Activated CD8-positive, alpha-beta T cell treated with anti-CD3 and anti-CD28 coated beads, Interleukin-2, amount 10 ng/mL, durations not matched to agents 7 days and 5 days (primary cell): ENCODE measurements at regions of chr2 and their contacts with region 1.

Region 1: GRCh38 chr2:197255543-197255942 is 55.0 kb downstream of the ANKRD44 start:
- DNase-seq: peak; percentile 84
- ATAC-seq: peak; percentile 94
- H3K4me3 Mint-ChIP-seq: peak overlapping the region; percentile 77
- H3K27ac Mint-ChIP-seq: peak overlapping the region; percentile 92
- H3K4me1 Mint-ChIP-seq: peaks cover 78% of the 10 kb centered on the region
- H3K27me3 Mint-ChIP-seq: no peaks in the 10 kb centered on the region

Region 2: GRCh38 chr2:197079832-197080555 is 175.5 kb before region 1 on chr2:
- CTCF ChIA-PET with region 1: no interaction called
- POLR2A ChIA-PET with region 1: no interaction called
- DNase-seq: no peak
- ATAC-seq: no peak
- H3K4me3 Mint-ChIP-seq: no peak overlapping the region
- H3K27ac Mint-ChIP-seq: no peak overlapping the region
- H3K4me1 Mint-ChIP-seq: no peaks in the 10 kb centered on the region
- H3K27me3 Mint-ChIP-seq: no peaks in the 10 kb centered on the region

Region 3: GRCh38 chr2:197304556-197305011 is 49.0 kb after region 1 on chr2:
- CTCF ChIA-PET with region 1: interaction called, 6 read pairs
- POLR2A ChIA-PET with region 1: interaction called, 87 read pairs
- DNase-seq: no peak
- ATAC-seq: peak; percentile 12
- H3K4me3 Mint-ChIP-seq: peak overlapping the region; percentile 95
- H3K27ac Mint-ChIP-seq: peak overlapping the region; percentile 84
- H3K4me1 Mint-ChIP-seq: peaks cover 81% of the 10 kb centered on the region
- H3K27me3 Mint-ChIP-seq: no peaks in the 10 kb centered on the region